ENCODE measurements at regions of chr12 and their contacts with region 1.

Region 1: GRCh38 chr12:132986001-132986912 is at the start of gene ZNF26:
- DNase-seq: peak; percentile 94
- total RNA-seq, gene ZNF26: 4.4 TPM

Region 2: DNA sequence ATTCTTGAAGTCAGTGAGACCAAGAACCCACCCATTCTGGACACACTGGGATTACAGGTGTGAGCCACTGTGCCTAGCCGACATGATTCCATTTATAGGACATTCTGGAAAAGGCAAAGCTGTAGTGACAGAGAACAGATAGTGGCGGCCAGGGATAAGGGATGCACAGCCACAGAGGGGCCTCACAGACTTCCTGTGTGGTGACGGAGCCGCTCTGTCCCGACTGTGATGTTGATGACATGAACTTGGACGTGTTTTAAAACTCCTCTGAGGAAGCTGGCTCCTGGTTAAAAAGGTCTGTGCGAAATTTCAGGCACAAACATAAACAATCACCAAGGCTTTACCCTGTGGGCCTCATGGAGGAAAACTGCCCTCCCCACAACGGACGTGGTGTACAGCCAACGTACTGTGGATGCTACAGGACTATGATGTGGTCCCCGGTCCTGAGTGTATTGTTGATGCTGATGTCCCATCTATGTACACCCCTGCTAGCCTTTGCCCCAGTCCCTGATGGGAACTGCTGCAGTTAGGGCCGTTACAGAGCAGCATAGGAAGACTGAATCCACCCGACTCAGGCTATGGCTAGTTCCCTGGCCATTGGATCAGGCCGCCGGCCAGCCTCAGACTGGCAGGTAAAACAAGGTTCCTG is 46.1 kb before region 1 on chr12:
- intact Hi-C with region 1: no loop called
- DNase-seq: no peak

Region 3: GRCh38 chr12:132956011-132956788 is 30.1 kb before region 1 on chr12 and contains the start of gene ZNF605:
- intact Hi-C with region 1: loop called (anchors 1 kb)
- DNase-seq: peak; percentile 94
- total RNA-seq, gene ZNF605: 12.6 TPM

Region 4: DNA sequence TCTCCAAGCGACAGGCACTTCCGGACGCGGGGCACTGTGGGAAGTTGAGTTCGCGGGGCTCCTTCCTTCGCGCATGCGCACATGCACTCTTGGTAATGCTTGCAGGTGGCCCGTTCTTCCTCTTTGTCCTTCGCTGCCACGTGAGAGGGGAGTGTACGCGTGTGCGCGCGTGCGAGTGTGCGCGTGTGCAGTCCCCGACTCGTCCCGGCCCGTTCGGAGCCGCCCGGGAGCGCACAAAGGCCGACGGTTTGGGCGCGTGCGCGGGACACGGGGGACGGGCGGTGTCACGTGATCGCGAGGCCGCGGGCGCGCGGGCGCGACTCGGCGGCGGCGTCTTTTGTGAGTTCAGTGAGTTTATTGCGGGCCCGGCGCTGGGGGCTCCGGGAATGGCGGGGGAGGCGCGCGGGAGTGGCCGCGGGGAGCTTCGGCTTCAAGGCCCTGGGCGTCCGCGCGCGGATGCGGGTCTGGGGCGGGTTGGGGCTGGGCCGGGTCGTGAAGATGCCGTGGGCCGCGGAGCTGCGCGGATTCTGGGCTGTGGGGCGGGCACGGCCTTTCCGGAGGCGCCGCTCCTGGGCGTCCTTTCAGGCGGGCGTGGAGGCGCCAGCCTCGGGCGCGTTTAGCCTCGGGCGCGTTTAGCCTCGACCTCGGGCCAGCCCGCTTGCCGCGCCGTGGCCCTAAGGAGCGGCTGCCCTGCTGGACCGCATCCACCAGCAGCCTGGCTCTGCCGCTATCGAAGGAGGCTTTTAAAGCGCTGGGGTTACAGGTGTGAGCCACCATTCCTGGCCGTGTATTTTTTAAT is 51.1 kb after region 1 on chr12 and contains the start of gene ZNF84:
- intact Hi-C with region 1: loop called (anchors 1 kb)
- DNase-seq: peak; percentile 98
- total RNA-seq, gene ZNF84: 19.1 TPM

Measured in cardiac septum (tissue), 1 donor.